PC-9 (cell line): ENCODE measurements at regions of chr6 and their contacts with region 1.

Region 1: DNA sequence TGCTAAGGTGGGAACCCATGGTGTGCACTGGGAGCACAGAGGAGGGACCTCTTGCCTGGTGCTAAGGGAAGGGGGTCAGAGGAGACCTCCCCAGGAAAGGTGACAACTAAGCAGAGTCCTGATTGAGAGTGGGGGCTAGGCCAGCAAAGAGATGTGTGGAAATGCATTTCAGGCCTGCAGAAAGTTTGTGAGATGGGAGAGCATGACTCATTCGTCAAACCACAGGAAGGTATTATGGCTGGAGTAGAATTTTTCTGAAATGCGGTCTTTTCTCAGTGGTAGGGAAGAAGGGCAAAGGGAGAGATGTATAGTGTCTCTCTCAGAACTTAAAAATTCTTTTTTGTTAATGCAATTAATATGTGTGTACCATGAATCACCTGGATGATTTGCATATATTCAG is 23.6 kb upstream of the EDN1 start:
- DNase-seq: peak; percentile 24 to 70
- H3K4me3 ChIP-seq: no peak overlapping the region
- H3K27ac ChIP-seq: peak overlapping the region; percentile 93
- H3K4me1 ChIP-seq: peaks cover 28% of the 10 kb centered on the region
- H3K27me3 ChIP-seq: no peaks in the 10 kb centered on the region
- CTCF ChIP-seq: no peak

Region 2: DNA sequence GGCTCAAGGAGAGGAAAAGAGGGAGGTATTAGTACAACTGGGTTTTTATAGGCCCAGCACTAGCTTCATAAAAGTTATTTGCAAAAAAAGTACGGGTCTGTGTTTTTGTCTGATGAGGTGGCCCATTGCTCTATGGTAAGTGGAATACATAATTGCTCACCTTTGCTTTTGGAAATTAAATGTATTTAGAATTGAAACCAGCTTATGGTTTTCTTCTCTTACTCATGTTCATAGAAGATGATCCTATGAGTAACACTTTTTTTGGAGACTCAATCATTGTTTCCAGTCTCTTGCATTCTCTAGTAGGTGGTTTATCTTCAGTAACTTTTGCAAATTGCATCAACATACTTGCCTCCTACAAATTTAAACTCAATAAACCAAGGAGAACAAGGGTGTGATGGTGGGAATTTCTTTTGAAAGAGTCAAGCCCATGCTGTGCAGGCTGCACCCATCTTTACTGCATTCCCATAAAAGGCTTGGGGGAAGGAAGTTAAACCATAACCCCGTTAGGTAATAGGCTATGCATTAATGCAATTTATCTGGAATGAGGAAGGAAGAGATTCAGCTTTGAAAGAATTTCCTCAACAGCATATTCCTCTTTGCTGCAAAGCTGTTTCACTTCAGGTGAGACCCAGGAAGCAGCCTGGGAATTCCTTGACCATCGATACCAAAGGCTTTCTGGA is 24.9 kb before region 1 on chr6:
- CTCF ChIA-PET with region 1: no interaction called
- POLR2A ChIA-PET with region 1: no interaction called
- intact Hi-C with region 1: loop called (anchors 1 kb)
- DNase-seq: peak; percentile 31 to 100
- H3K4me3 ChIP-seq: no peak overlapping the region
- H3K27ac ChIP-seq: peak overlapping the region; percentile 64
- H3K4me1 ChIP-seq: peaks cover 19% of the 10 kb centered on the region
- H3K27me3 ChIP-seq: no peaks in the 10 kb centered on the region
- CTCF ChIP-seq: no peak